SK-N-SH (cell line): ENCODE measurements at regions of chr1 and their contacts with region 1.

Region 1: GRCh38 chr1:205528887-205529825 is 24.7 kb downstream of the CDK18 start:
- DNase-seq: peak; percentile 97
- H3K4me3 ChIP-seq: peak overlapping the region; percentile 40 to 59
- H3K27ac ChIP-seq: no peak overlapping the region
- H3K4me1 ChIP-seq: peaks cover 0 to 21% of the 10 kb centered on the region in 2 experiments; a peak in 1 of 4 replicates
- H3K27me3 ChIP-seq: no peaks in the 10 kb centered on the region
- CTCF ChIP-seq: peak; percentile 90
- EP300 ChIP-seq: no peak
- RAD21 ChIP-seq: peak; percentile 83

Region 2: DNA sequence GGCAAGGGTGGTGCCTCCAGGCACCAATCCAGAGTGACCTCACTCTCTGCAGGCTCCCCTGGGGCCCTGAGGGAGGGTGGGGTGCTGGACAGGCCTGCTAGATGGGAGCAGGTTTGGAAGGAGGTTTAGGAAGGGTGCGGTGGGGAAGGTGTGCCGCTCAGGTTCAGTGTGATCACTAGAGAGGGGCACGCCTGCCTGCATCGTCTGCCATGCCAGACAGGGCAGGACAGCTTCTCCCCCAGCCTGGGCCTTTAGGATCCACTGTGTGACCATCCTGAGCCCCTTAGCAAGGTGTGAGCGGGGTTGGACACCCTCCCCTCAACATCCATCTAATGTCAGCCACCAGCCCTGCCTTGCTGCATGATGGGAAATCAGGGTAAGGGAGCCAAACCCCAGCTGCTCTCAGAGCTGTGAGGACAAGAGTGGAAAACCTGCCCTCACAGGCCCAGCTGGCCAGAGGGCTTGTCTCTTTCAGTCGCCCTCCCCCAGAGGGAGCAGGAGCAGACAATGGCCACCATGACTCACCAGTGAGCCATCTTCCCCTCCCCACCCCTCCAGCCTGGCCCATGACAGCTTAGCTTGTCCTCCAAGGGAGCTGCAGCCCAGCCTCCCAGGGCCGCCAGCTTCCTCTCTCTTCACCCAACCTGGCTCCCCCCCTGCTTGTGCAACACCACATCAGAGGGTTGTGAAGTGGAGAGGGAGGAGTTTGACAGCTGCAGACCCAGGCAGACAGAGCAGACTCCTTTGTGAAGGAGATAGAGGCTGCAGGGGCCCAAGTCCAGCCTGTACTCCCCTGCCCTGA is 244.6 kb before region 1 on chr1:
- CTCF ChIA-PET with region 1: no interaction called
- POLR2A ChIA-PET with region 1: no interaction called
- DNase-seq: peak; percentile 56
- H3K4me3 ChIP-seq: no peak overlapping the region
- H3K27ac ChIP-seq: peak overlapping the region; percentile 66 to 82
- H3K4me1 ChIP-seq: peaks cover 8 to 33% of the 10 kb centered on the region in 2 experiments; a peak in 3 of 4 replicates
- H3K27me3 ChIP-seq: no peaks in the 10 kb centered on the region
- CTCF ChIP-seq: no peak
- EP300 ChIP-seq: peak in 1 of 2 experiments; percentile 77; a peak in 1 of 4 replicates
- RAD21 ChIP-seq: no peak

Region 3: DNA sequence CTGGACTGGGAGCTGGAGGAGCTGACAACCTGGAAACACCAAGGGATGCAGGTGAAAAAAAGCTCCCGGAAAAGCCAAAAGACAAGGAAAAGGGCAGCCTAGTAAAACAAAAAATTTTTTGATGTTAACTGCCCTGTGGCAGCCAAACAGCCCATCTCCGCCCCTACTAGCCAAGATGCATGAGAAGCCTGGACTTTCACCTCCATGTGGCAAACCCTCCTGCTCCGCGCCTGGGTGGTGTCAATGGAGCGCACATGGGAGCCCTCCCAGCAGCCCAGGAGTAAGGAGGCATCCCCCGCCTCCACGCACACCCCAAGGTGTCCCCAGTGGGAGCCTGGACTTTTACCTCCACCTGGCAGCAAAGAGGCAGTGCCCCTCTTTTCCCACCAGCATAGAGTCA is 137.8 kb before region 1 on chr1:
- CTCF ChIA-PET with region 1: interaction called, 72 read pairs
- POLR2A ChIA-PET with region 1: no interaction called
- DNase-seq: no peak
- H3K4me3 ChIP-seq: no peak overlapping the region
- H3K27ac ChIP-seq: no peak overlapping the region
- H3K4me1 ChIP-seq: no peaks in the 10 kb centered on the region; a peak in 1 of 4 replicates
- H3K27me3 ChIP-seq: no peaks in the 10 kb centered on the region; the same call in 1 of the 2 replicates
- CTCF ChIP-seq: no peak
- EP300 ChIP-seq: no peak
- RAD21 ChIP-seq: no peak

Region 4: GRCh38 chr1:205543411-205544301 is 14.5 kb after region 1 on chr1:
- CTCF ChIA-PET with region 1: interaction called, 23 read pairs
- POLR2A ChIA-PET with region 1: interaction called, 4 read pairs
- DNase-seq: peak; percentile 78
- H3K4me3 ChIP-seq: peak overlapping the region in 1 of 2 experiments; percentile 37; a peak in 2 of 4 replicates
- H3K27ac ChIP-seq: peak overlapping the region; percentile 23 to 88; a peak in 3 of 4 replicates
- H3K4me1 ChIP-seq: peaks cover 0 to 8% of the 10 kb centered on the region in 2 experiments; a peak in 1 of 4 replicates
- H3K27me3 ChIP-seq: no peaks in the 10 kb centered on the region
- CTCF ChIP-seq: no peak
- EP300 ChIP-seq: no peak
- RAD21 ChIP-seq: no peak

Region 5: DNA sequence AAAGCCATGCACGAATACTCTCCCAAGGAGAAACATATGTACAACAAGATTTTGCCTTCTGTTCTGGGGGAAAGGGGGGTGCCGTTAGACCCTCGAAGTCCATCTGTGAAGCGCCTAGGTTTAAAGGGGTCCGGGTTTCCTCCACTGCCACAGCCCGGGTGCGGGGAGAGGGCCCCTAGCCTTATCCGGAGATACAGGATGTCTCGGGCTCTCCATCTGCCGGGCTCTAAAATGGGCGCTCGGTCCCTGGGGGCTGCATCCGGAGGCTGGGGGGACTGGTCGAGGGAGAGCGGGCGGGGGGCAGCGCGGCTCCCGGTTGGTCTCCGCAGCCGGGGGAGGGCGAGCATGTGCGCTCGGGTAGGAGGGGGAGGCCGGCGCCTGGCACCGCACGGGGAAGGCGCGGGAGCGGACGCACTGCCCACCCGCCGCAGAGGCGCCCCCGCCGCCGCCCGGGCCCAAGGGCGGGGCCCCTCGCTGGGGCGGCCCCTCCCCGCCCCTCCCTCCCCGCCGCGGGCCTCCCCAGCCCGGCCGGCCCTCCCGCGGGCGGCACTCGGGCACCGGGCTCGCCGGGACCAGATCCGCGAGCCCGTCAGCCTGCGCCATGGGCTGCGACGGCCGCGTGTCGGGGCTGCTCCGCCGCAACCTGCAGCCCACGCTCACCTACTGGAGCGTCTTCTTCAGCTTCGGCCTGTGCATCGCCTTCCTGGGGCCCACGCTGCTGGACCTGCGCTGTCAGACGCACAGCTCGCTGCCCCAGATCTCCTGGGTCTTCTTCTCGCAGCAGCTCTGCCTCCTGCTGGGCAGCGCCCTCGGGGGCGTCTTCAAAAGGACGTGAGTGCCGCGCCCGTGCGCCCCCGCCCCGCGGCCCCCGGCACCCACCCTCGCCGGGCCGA is 39.6 kb after region 1 on chr1:
- CTCF ChIA-PET with region 1: interaction called, 12 read pairs
- POLR2A ChIA-PET with region 1: no interaction called
- DNase-seq: peak; percentile 77
- H3K4me3 ChIP-seq: peak overlapping the region in 1 of 2 experiments; percentile 27; a peak in 1 of 4 replicates
- H3K27ac ChIP-seq: no peak overlapping the region
- H3K4me1 ChIP-seq: peaks cover 0 to 2% of the 10 kb centered on the region in 2 experiments; a peak in 1 of 4 replicates
- H3K27me3 ChIP-seq: peaks cover 69% of the 10 kb centered on the region
- CTCF ChIP-seq: no peak; the same call in 1 of the 2 replicates
- EP300 ChIP-seq: no peak
- RAD21 ChIP-seq: no peak

Region 6: GRCh38 chr1:205631727-205632373 is 102.7 kb after region 1 on chr1 and contains the start of gene ELK4:
- CTCF ChIA-PET with region 1: interaction called, 59 read pairs
- POLR2A ChIA-PET with region 1: interaction called, 11 read pairs
- DNase-seq: peak; percentile 98
- H3K4me3 ChIP-seq: peak within 1 kb of the TSS; percentile 77 to 83
- H3K27ac ChIP-seq: peak within 1 kb of the TSS; percentile 95
- H3K4me1 ChIP-seq: peaks cover 0 to 9% of the 10 kb centered on the region in 2 experiments; a peak in 2 of 4 replicates
- H3K27me3 ChIP-seq: no peaks in the 10 kb centered on the region
- CTCF ChIP-seq: peak; percentile 73
- EP300 ChIP-seq: peak in 1 of 2 experiments; percentile 36; a peak in 1 of 4 replicates
- RAD21 ChIP-seq: peak; percentile 77
- polyA plus RNA-seq, gene ELK4: 2.6 and 3.8 TPM in 2 replicates

Region 7: DNA sequence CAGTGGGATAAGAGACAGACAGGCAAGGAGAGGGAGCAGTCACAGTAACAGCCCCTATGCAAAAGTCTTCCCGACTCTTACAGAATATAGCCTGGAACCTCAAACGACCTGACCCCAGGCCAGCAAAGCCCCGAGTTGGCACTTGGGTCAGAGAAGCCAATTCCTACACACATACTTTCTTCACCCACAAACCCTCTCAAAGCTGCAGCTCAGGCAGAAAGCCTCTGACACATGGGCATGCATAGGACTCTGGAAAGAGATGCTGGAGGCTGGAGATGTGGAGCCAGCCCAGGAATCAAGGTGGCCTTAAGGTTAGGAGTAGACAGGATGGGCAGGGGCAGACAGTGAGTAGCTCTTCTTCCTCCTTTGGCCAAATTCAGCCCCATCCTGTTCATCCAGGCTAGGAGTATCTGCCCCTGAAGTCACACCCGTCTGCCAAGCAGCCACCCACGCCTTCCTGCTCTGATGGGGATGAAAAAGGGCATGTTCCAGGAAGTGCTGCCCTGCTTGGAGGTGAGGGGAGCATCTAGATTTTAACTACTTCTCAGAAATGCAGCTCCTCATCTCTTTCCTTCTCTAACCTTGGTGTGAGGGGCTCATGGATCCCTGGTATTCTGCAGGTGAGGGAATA is 276.0 kb after region 1 on chr1:
- CTCF ChIA-PET with region 1: no interaction called
- POLR2A ChIA-PET with region 1: no interaction called
- DNase-seq: no peak
- H3K4me3 ChIP-seq: no peak overlapping the region
- H3K27ac ChIP-seq: no peak overlapping the region
- H3K4me1 ChIP-seq: peaks cover 0 to 18% of the 10 kb centered on the region in 2 experiments; a peak in 1 of 4 replicates
- H3K27me3 ChIP-seq: no peaks in the 10 kb centered on the region
- CTCF ChIP-seq: no peak
- EP300 ChIP-seq: no peak
- RAD21 ChIP-seq: no peak

Region 8: DNA sequence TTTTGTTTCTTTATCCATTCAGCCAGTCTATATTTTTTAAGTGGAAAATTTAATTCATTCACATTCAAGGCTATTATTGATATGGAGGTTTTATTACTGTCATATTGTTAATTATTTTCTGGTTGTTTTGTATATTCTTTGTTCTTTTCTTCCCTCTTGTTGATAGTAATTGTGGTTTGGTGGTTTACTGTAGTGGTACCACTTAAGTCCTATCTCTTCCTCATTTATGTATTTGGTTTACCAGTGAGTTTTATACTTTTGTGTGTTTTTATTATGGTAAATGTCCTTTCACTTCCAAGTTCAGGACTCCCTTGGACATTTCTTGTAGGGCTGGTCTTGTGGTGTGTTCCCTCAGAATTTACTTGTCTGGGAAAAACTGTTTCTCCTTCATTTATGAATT is 348.9 kb after region 1 on chr1:
- CTCF ChIA-PET with region 1: no interaction called
- POLR2A ChIA-PET with region 1: no interaction called
- DNase-seq: no peak
- H3K4me3 ChIP-seq: no peak overlapping the region
- H3K27ac ChIP-seq: no peak overlapping the region
- H3K4me1 ChIP-seq: no peaks in the 10 kb centered on the region
- H3K27me3 ChIP-seq: no peaks in the 10 kb centered on the region
- CTCF ChIP-seq: no peak
- EP300 ChIP-seq: no peak
- RAD21 ChIP-seq: no peak

Region 9: GRCh38 chr1:205919026-205919746 is 390.0 kb after region 1 on chr1:
- CTCF ChIA-PET with region 1: no interaction called
- POLR2A ChIA-PET with region 1: no interaction called
- DNase-seq: peak; percentile 79
- H3K4me3 ChIP-seq: no peak overlapping the region; a peak in 1 of 4 replicates
- H3K27ac ChIP-seq: no peak overlapping the region
- H3K4me1 ChIP-seq: peaks cover 0 to 7% of the 10 kb centered on the region in 2 experiments; a peak in 1 of 4 replicates
- H3K27me3 ChIP-seq: no peaks in the 10 kb centered on the region
- CTCF ChIP-seq: peak; percentile 81
- EP300 ChIP-seq: no peak
- RAD21 ChIP-seq: peak; percentile 92